ENCODE measurements at regions of chr18 and their contacts with region 1.

Region 1: GRCh38 chr18:45722899-45723298 is 1.1 kb upstream of the SLC14A1 start:
- DNase-seq: peak; percentile 60 to 69
- ATAC-seq: peak; percentile 81 to 99 (median 99)
- H3K4me3 ChIP-seq: no peak overlapping the region
- H3K4me3 Mint-ChIP-seq: no peak overlapping the region
- H3K27ac ChIP-seq: no peak overlapping the region
- H3K27ac Mint-ChIP-seq: no peak overlapping the region
- H3K4me1 ChIP-seq: no peaks in the 10 kb centered on the region
- H3K4me1 Mint-ChIP-seq: no peaks in the 10 kb centered on the region
- H3K27me3 ChIP-seq: no peaks in the 10 kb centered on the region
- H3K27me3 Mint-ChIP-seq: no peaks in the 10 kb centered on the region
- CTCF ChIP-seq: peak; percentile 70

Region 2: GRCh38 chr18:45169610-45170009 is 553.3 kb before region 1 on chr18:
- intact Hi-C with region 1: no loop called
- DNase-seq: no peak
- ATAC-seq: no peak
- H3K4me3 ChIP-seq: no peak overlapping the region
- H3K4me3 Mint-ChIP-seq: no peak overlapping the region
- H3K27ac ChIP-seq: no peak overlapping the region
- H3K27ac Mint-ChIP-seq: no peak overlapping the region
- H3K4me1 ChIP-seq: no peaks in the 10 kb centered on the region
- H3K4me1 Mint-ChIP-seq: no peaks in the 10 kb centered on the region
- H3K27me3 ChIP-seq: no peaks in the 10 kb centered on the region
- H3K27me3 Mint-ChIP-seq: peaks cover 0 to 3% of the 10 kb centered on the region in 2 donors
- CTCF ChIP-seq: no peak

Region 3: GRCh38 chr18:45738658-45739057 is 15.8 kb after region 1 on chr18:
- intact Hi-C with region 1: no loop called
- DNase-seq: no peak
- ATAC-seq: no peak
- H3K4me3 ChIP-seq: no peak overlapping the region
- H3K4me3 Mint-ChIP-seq: no peak overlapping the region
- H3K27ac ChIP-seq: no peak overlapping the region
- H3K27ac Mint-ChIP-seq: no peak overlapping the region
- H3K4me1 ChIP-seq: no peaks in the 10 kb centered on the region
- H3K4me1 Mint-ChIP-seq: no peaks in the 10 kb centered on the region
- H3K27me3 ChIP-seq: no peaks in the 10 kb centered on the region
- H3K27me3 Mint-ChIP-seq: no peaks in the 10 kb centered on the region
- CTCF ChIP-seq: no peak

Region 4: DNA sequence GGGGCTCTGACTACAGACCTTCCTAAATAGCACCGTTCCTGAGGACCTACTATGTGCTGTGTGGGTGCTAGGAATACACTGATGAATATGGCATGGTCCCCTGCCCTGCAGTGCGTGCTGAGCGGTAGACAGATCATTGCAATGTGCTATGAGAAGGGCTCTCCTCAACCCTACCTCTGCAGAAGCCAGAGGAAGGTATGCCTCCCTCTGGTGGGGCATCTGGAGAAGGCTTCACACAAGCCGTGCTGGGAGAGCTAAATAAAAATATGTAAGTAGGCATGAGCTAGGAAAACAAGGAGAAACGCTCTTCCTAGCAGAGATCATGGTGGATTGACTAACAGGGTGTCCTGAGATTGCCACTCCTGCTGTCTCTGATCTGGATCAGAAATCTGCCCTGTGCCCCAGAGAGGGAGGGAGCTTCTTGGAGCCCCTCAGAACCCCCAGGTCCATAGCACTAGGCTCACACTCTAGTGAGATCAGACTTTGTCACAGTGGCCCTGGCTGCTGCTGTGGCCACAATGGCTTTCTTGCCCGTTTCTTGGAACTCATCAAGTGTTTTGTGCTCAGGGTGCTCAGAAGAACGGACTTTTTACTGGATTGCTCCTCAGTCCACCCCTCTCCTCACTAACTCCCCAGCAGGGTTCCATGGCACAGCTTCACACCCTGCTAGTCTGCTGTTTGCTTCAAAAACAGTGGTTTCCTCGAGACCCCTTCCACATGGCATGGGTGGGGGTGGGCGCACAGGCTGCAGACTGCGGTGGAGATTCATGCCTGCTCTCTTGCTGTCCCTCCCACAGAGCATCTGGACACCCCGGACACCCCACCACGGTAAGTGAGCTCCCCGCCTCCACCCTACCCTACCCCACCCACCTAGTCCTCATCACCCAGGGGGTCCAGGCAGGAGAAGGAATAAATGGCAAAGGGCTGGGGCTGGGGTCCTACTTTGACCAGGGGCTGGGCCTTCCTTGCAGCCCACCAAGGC is 116.8 kb after region 1 on chr18:
- intact Hi-C with region 1: loop called (anchors 2 kb)
- DNase-seq: peak in 1 of 2 donors; percentile 61
- ATAC-seq: peak; percentile 55 to 61 (median 60)
- H3K4me3 ChIP-seq: no peak overlapping the region
- H3K4me3 Mint-ChIP-seq: peak overlapping the region; percentile 76
- H3K27ac ChIP-seq: no peak overlapping the region
- H3K27ac Mint-ChIP-seq: no peak overlapping the region
- H3K4me1 ChIP-seq: peaks cover 11% of the 10 kb centered on the region
- H3K4me1 Mint-ChIP-seq: peaks cover 18 to 25% of the 10 kb centered on the region in 2 donors
- H3K27me3 ChIP-seq: peaks cover 20% of the 10 kb centered on the region
- H3K27me3 Mint-ChIP-seq: peaks cover 17 to 31% of the 10 kb centered on the region in 2 donors
- CTCF ChIP-seq: no peak

Region 5: GRCh38 chr18:46073474-46074331 is 350.8 kb after region 1 on chr18:
- intact Hi-C with region 1: no loop called
- DNase-seq: peak in 1 of 2 donors; percentile 85
- ATAC-seq: peak; percentile 54 to 58 (median 56)
- H3K4me3 ChIP-seq: no peak overlapping the region
- H3K4me3 Mint-ChIP-seq: peak overlapping the region; percentile 62
- H3K27ac ChIP-seq: no peak overlapping the region
- H3K27ac Mint-ChIP-seq: peak overlapping the region; percentile 13 to 61
- H3K4me1 ChIP-seq: peaks cover 34% of the 10 kb centered on the region
- H3K4me1 Mint-ChIP-seq: peaks cover 35 to 43% of the 10 kb centered on the region in 2 donors
- H3K27me3 ChIP-seq: peaks cover 2% of the 10 kb centered on the region
- H3K27me3 Mint-ChIP-seq: no peaks in the 10 kb centered on the region
- CTCF ChIP-seq: peak; percentile 79